ENCODE measurements at regions of chr5 and their contacts with region 1.

Region 1: DNA sequence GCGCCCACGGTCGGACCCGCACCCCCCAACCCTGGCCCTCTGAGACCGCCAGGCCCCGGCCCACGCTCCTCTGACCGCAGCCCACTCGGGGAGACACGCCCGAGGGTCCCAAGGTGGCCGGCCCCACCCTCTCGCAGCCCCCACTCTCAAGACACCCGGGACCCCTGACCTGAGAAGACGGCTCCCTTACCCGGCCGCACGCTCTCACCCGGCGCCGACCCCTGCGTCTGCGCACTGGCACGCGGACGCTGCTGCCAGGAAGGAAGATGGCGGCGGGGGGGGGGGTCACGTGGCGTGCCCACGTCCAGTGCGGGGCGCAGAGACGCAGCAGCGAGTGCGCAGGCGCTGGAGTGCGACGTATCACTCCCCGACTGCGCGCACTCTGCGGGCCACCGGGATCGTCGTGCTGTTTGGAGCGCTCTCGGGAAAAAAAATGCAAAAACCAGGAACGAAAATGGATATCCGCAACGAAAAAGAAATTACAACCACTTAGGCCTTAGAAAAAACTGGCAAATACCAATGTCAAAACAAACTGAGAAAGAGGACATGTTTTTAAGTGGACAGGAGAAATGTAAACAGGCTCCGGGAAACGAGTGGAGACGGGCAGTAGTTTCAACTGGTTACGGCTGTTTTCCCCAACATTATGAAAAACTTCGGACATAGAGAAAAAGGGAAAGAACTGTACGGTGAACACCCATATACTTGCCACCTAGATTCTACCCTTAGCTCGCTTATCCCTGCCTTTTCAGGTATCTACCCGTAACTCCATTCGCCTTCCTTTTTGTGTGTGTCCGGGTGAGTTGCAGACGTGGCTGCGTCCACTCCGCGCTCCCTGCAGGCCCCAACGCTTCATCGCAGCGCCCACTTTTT is at the start of gene MRPL36:
- DNase-seq: peak; percentile 71
- H3K4me3 ChIP-seq: peak within 1 kb of the TSS; percentile 87
- H3K27ac ChIP-seq: peak within 1 kb of the TSS; percentile 80
- H3K27me3 ChIP-seq: no peaks in the 10 kb centered on the region
- CTCF ChIP-seq: no peak
- polyA plus RNA-seq, gene MRPL36: 104 and 118 TPM in 2 replicates

Region 2: DNA sequence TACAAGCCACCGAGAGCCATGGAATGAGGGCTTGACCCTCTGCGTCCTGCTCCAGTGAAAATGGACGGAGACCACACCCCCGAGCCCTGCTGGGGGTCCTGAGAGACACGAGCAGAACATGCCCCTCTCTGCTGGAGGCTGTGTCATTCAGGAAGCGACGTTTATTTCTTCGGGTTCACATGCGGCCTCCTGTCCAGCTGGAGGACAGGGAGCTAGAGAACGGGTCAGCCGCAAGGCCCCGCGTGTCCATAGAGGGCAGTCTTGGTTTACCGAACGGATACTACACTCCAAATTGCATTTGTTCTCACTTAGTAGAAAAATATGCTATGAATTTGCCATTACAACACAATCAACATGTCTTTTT is 36.3 kb before region 1 on chr5:
- CTCF ChIA-PET with region 1: interaction called, 23 read pairs
- POLR2A ChIA-PET with region 1: no interaction called
- DNase-seq: peak; percentile 37
- H3K4me3 ChIP-seq: no peak overlapping the region
- H3K27ac ChIP-seq: no peak overlapping the region
- H3K27me3 ChIP-seq: peaks cover 16% of the 10 kb centered on the region
- CTCF ChIP-seq: peak; percentile 95

Region 3: DNA sequence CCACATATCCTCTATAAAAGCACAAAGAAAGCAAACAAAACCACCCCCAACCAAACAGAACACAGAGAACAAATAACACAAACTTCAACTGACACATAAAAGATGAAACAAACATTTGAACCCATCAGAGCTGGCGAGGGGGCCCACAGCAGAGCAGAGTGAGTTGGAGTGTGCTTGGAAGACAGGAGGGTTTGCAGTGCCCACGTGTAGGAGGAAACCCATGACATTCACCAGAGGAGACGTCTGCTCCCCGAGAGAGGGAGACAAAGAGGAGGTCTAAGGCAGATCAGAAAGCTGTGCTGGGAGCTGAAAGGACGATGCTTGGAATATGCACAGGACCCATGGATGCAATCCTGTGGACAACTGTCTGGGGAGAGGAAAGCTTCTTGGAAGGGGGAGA is 27.2 kb before region 1 on chr5:
- CTCF ChIA-PET with region 1: interaction called, 14 read pairs
- POLR2A ChIA-PET with region 1: no interaction called
- DNase-seq: peak; percentile 23
- H3K4me3 ChIP-seq: no peak overlapping the region
- H3K27ac ChIP-seq: no peak overlapping the region
- H3K27me3 ChIP-seq: peaks cover 13% of the 10 kb centered on the region
- CTCF ChIP-seq: peak; percentile 74

Region 4: GRCh38 chr5:1851290-1851934 is 51.6 kb after region 1 on chr5:
- CTCF ChIA-PET with region 1: no interaction called
- POLR2A ChIA-PET with region 1: no interaction called
- DNase-seq: no peak
- H3K4me3 ChIP-seq: no peak overlapping the region
- H3K27ac ChIP-seq: no peak overlapping the region
- H3K27me3 ChIP-seq: peaks cover 55% of the 10 kb centered on the region
- CTCF ChIP-seq: no peak

Region 5: DNA sequence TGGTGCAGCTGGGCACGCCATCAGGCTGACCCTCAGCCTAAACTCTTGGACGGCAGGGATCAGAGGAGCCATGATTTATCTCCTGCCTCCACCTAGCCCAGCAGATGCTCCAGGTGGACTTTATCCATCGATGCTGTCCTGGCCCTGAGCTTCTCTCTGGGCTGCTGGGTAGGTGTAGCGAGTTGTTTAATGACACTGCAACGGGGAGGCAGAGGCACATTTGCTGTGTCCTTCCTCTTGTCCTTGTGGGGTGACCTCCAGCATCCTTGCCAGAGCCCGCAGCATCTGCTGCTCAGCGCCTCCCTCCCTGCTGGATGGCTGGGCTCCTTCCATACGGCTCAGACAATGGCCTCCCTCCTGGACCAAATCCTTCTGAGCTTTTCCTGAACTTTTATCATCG is 185.9 kb after region 1 on chr5:
- CTCF ChIA-PET with region 1: no interaction called
- POLR2A ChIA-PET with region 1: no interaction called
- DNase-seq: no peak
- H3K4me3 ChIP-seq: no peak overlapping the region
- H3K27ac ChIP-seq: no peak overlapping the region
- H3K27me3 ChIP-seq: no peaks in the 10 kb centered on the region
- CTCF ChIP-seq: no peak

Measured in AG04450 (cell line).